AG04450 (cell line): ENCODE measurements at regions of chr3 and their contacts with region 1.

Region 1: DNA sequence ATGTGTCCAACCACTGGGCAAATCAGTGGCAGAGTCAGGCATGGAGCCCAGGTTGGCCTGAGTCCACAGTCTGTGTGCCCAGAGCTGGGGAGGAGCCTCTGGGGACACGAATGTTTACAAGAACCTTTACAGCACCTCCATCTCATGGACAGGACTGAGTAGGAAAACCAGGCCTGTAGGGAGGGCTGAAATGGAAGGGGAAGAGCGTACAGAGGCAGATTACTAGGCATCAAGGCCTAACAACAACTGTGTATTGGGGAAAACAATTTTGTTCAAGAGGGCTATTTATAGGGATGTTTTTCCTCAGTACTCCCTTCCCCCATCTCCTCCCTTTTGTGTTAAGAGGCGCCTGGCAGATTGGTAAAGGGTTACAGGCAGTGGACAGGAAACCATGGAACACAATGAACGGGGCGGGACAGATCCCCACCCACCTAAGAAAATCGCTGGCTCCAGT is 15.1 kb upstream of the ARHGAP31 start:
- DNase-seq: no peak
- H3K4me3 ChIP-seq: no peak overlapping the region
- H3K27ac ChIP-seq: no peak overlapping the region
- H3K27me3 ChIP-seq: no peaks in the 10 kb centered on the region
- CTCF ChIP-seq: no peak

Region 2: GRCh38 chr3:119219069-119219468 is 60.1 kb before region 1 on chr3:
- CTCF ChIA-PET with region 1: no interaction called
- POLR2A ChIA-PET with region 1: no interaction called
- DNase-seq: no peak
- H3K4me3 ChIP-seq: no peak overlapping the region
- H3K27ac ChIP-seq: no peak overlapping the region
- H3K27me3 ChIP-seq: no peaks in the 10 kb centered on the region
- CTCF ChIP-seq: no peak

Region 3: DNA sequence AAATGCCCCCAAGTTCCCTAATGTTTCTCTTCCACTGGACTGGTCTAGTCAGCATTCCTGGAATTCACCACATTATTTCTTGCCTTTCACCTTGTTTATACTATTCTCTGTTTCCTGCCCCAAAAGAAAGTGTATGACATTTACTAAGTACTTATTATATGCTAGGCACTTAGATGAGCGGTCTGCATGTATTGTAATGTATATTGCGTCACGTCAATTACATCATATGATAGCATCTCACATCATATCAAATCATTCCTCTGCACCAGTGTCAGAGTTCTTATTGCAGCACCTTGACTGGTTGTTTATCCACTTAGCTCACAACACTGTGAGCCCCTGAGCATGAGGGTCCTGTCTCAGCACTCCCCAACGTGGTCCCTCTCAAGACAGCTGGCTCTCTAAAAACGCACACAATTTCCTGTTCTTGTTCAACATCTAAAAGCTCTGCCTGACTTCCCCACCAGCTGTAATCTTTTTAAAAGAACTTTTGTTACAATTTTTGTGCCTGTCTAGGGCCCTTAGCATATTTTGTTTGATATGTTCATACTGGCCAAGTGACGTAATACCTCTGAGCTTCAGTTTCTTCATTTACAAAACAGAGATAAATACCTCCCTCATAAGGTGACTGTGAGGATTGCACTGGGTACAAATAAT is 73.8 kb after region 1 on chr3:
- CTCF ChIA-PET with region 1: interaction called, 26 read pairs
- POLR2A ChIA-PET with region 1: interaction called, 3 read pairs
- DNase-seq: peak; percentile 51
- H3K4me3 ChIP-seq: no peak overlapping the region
- H3K27ac ChIP-seq: peak overlapping the region; percentile 88
- H3K27me3 ChIP-seq: no peaks in the 10 kb centered on the region
- CTCF ChIP-seq: peak; percentile 58

Region 4: GRCh38 chr3:119681279-119681678 is 402.2 kb after region 1 on chr3:
- CTCF ChIA-PET with region 1: interaction called, 12 read pairs
- POLR2A ChIA-PET with region 1: no interaction called
- DNase-seq: no peak
- H3K4me3 ChIP-seq: no peak overlapping the region
- H3K27ac ChIP-seq: no peak overlapping the region
- H3K27me3 ChIP-seq: peaks cover 8% of the 10 kb centered on the region
- CTCF ChIP-seq: peak; percentile 57